Calu3 (cell line): ENCODE measurements at regions of chr1 and their contacts with region 1.

Region 1: GRCh38 chr1:189970319-189971249 is 507.1 kb downstream of the BRINP3 start:
- DNase-seq: no peak
- H3K4me3 Mint-ChIP-seq: no peak overlapping the region
- H3K27ac Mint-ChIP-seq: peak overlapping the region; percentile 88
- H3K4me1 Mint-ChIP-seq: peaks cover 39% of the 10 kb centered on the region
- H3K27me3 Mint-ChIP-seq: no peaks in the 10 kb centered on the region
- CTCF ChIP-seq: no peak

Region 2: GRCh38 chr1:189847613-189848012 is 123.0 kb before region 1 on chr1:
- CTCF ChIA-PET with region 1: no interaction called
- intact Hi-C with region 1: loop called (anchors 5 kb)
- DNase-seq: no peak
- H3K4me3 Mint-ChIP-seq: no peak overlapping the region
- H3K27ac Mint-ChIP-seq: no peak overlapping the region
- H3K4me1 Mint-ChIP-seq: no peaks in the 10 kb centered on the region
- H3K27me3 Mint-ChIP-seq: no peaks in the 10 kb centered on the region
- CTCF ChIP-seq: no peak

Region 3: GRCh38 chr1:190104961-190105360 is 134.4 kb after region 1 on chr1:
- CTCF ChIA-PET with region 1: no interaction called
- intact Hi-C with region 1: loop called (anchors 5 kb)
- DNase-seq: no peak
- H3K4me3 Mint-ChIP-seq: no peak overlapping the region
- H3K27ac Mint-ChIP-seq: no peak overlapping the region
- H3K4me1 Mint-ChIP-seq: peaks cover 11% of the 10 kb centered on the region
- H3K27me3 Mint-ChIP-seq: no peaks in the 10 kb centered on the region
- CTCF ChIP-seq: no peak

Region 4: GRCh38 chr1:190168893-190169667 is 198.5 kb after region 1 on chr1:
- CTCF ChIA-PET with region 1: no interaction called
- intact Hi-C with region 1: loop called (anchors 5 kb)
- DNase-seq: no peak
- H3K4me3 Mint-ChIP-seq: no peak overlapping the region
- H3K27ac Mint-ChIP-seq: peak overlapping the region; percentile 45
- H3K4me1 Mint-ChIP-seq: peaks cover 30% of the 10 kb centered on the region
- H3K27me3 Mint-ChIP-seq: no peaks in the 10 kb centered on the region
- CTCF ChIP-seq: no peak